Transverse colon (tissue), 4 donors: ENCODE measurements at regions of chr1 and their contacts with region 1.

Region 1: GRCh38 chr1:12658531-12659453 is 14.9 kb downstream of the AADACL4 start:
- DNase-seq: peak; percentile 75
- H3K4me3 ChIP-seq: no peak overlapping the region
- H3K27ac ChIP-seq: no peak overlapping the region
- H3K4me1 ChIP-seq: no peaks in the 10 kb centered on the region
- H3K27me3 ChIP-seq: no peaks in the 10 kb centered on the region
- CTCF ChIP-seq: peak; percentile 91 to 96 (median 94)
- EP300 ChIP-seq: no peak
- POLR2A ChIP-seq: no peak

Region 2: GRCh38 chr1:12124693-12125421 is 533.9 kb before region 1 on chr1:
- in situ Hi-C with region 1: loop called in 3 of 4 experiments (anchors 25 kb)
- intact Hi-C with region 1: no loop called
- DNase-seq: peak; percentile 78
- H3K4me3 ChIP-seq: no peak overlapping the region
- H3K27ac ChIP-seq: no peak overlapping the region
- H3K4me1 ChIP-seq: peaks cover 0 to 10% (median 5%) of the 10 kb centered on the region in 4 donors
- H3K27me3 ChIP-seq: no peaks in the 10 kb centered on the region
- CTCF ChIP-seq: peak; percentile 96 to 99 (median 98)
- EP300 ChIP-seq: no peak
- POLR2A ChIP-seq: no peak

Region 3: DNA sequence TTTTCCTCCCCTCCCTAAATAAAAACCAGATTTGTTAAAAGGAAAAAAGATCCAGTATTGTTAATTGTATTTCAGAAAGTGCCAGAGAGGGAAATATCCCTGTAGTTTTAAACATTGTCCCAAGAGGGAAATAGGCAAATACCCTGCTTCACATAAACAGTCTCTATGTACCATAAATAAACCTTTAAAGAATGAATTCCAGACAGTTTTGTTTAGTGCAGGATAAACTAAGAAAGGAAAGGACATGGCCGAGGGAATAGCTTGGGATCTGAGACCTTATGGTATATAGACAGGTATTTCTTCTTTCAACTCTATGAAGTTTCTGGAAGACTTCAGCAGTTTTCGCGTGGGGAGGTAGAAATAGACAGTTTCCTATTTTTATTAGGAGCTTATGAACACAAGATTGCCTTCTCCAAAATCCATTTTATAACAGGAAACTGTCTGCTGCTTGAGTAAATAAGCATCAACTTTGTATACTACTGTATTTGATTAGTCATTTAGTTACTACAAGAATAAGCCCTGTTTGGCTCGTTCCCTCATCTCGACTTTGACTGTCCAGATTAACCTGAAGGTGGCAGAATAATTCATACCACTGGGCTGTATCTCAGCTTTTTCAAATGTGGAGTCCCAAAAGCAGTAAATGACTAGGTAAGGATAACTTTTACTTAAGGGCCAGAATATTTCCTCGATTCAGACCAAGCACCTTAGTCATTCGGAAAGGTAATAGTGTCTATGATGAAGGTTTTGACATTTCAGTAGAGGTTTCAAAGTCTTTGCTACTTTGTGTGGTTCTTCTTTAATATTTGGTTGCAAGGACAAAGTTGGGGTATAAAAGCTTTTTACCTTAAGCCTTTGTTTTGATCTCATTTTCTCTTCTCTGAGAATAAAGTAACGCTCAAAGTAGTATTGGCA is 251.5 kb before region 1 on chr1:
- in situ Hi-C with region 1: no loop called
- intact Hi-C with region 1: loop called (anchors 10 kb)
- DNase-seq: no peak
- H3K4me3 ChIP-seq: no peak overlapping the region
- H3K27ac ChIP-seq: peak overlapping the region; percentile 42 to 65 (median 54)
- H3K4me1 ChIP-seq: peaks cover 25 to 61% (median 49%) of the 10 kb centered on the region in 4 donors
- H3K27me3 ChIP-seq: no peaks in the 10 kb centered on the region
- CTCF ChIP-seq: peak; percentile 28 to 45 (median 34)
- EP300 ChIP-seq: no peak
- POLR2A ChIP-seq: no peak

Region 4: GRCh38 chr1:12454406-12455391 is 204.1 kb before region 1 on chr1:
- in situ Hi-C with region 1: no loop called
- intact Hi-C with region 1: no loop called
- DNase-seq: no peak
- H3K4me3 ChIP-seq: no peak overlapping the region
- H3K27ac ChIP-seq: peak overlapping the region; percentile 57 to 63 (median 59)
- H3K4me1 ChIP-seq: peaks cover 19 to 75% (median 41%) of the 10 kb centered on the region in 4 donors
- H3K27me3 ChIP-seq: no peaks in the 10 kb centered on the region
- CTCF ChIP-seq: no peak
- EP300 ChIP-seq: no peak
- POLR2A ChIP-seq: no peak